HepG2 (cell line): ENCODE measurements at regions of chr7 and their contacts with region 1.

Region 1: GRCh38 chr7:50560865-50561351 is 4.3 kb downstream of the DDC start:
- DNase-seq: peak; percentile 80
- ATAC-seq: peak; percentile 85
- H3K4me3 ChIP-seq: peak overlapping the region in 1 of 3 experiments; percentile 42; a peak in 2 of 6 replicates
- H3K27ac ChIP-seq: peak overlapping the region; percentile 60
- H3K4me1 ChIP-seq: peaks cover 97% of the 10 kb centered on the region
- H3K27me3 ChIP-seq: no peaks in the 10 kb centered on the region
- CTCF ChIP-seq: peak; percentile 32
- EP300 ChIP-seq: peak in 1 of 2 experiments; percentile 54; a peak in 1 of 4 replicates
- POLR2A ChIP-seq: peak; percentile 52 to 69; a peak in 3 of 4 replicates
- RAD21 ChIP-seq: peak; percentile 44

Region 2: DNA sequence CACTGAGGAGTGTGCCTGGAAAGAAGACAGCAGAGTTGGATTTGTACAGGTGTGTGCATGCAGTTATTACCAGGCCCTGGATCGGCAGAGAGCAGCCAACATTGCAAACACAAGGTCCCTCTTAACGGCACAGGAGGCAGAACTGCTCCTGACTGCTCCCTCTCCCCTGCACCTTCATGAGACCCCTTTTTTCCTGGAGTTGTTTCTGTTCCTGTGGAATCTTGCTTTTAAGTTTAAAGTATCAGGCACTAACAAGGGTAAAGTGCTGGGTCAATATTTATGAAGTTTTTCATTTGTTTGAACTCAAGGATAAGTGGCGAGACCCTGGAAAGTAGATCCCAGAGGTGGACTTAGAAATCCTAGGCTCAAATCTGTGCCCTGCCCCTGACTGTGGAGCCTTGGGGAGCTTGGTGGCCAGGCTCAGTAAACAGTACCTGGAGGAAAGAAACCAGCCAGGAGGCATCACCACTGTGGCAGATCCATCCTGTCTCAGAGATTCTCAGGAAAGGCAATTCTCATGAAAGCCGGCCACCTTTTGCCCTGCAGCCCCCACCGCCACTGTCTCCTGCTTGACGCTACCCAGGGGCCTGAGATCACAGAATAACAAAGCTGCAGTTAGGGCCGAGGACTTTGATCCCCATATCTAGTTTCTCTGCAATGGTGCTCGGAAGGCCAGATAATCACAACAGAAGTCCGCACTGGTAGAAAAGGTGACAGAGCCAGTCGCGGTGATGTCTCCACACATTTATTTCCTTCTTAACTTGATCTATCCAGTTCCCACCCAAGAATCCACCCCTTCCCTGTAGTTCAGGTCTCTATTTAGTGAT is 32.4 kb before region 1 on chr7:
- CTCF ChIA-PET with region 1: no interaction called
- POLR2A ChIA-PET with region 1: interaction called, 11 read pairs
- in situ Hi-C with region 1: no loop called
- intact Hi-C with region 1: loop called (anchors 2 kb)
- DNase-seq: peak; percentile 83
- ATAC-seq: peak; percentile 98
- H3K4me3 ChIP-seq: peak overlapping the region in 2 of 3 experiments; percentile 12 to 49; a peak in 2 of 6 replicates
- H3K27ac ChIP-seq: peak overlapping the region; percentile 72
- H3K4me1 ChIP-seq: peaks cover 36% of the 10 kb centered on the region
- H3K27me3 ChIP-seq: no peaks in the 10 kb centered on the region
- CTCF ChIP-seq: no peak
- EP300 ChIP-seq: 0 out of 4 replicates have a peak, but pooled peaks of 1 of the 2 experiments have one; percentile 10
- POLR2A ChIP-seq: no peak
- RAD21 ChIP-seq: no peak

Region 3: DNA sequence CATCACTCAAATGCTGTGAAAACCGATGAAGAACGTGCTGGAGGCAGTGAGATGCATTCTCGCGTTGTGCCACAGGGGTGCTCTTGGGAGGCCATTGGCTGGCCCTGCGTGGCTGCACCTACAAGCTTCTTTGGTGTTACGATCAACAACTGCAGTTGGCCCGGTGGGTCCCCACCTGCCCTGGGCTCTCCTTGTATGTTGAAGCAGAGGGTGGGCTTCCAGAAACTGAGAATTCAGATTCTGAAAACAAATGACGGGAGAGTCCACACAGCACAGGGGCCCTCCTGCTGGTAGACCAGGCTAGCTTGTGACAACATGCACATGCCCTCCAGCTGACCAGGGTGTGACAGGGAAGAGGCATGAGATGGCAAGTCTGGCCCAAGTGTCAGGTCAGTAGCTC is 28.0 kb after region 1 on chr7:
- CTCF ChIA-PET with region 1: no interaction called
- POLR2A ChIA-PET with region 1: interaction called, 17 read pairs
- in situ Hi-C with region 1: no loop called
- intact Hi-C with region 1: no loop called
- DNase-seq: no peak
- ATAC-seq: peak; percentile 72
- H3K4me3 ChIP-seq: peak overlapping the region in 1 of 3 experiments; percentile 8; a peak in 1 of 6 replicates
- H3K27ac ChIP-seq: no peak overlapping the region
- H3K4me1 ChIP-seq: peaks cover 43% of the 10 kb centered on the region
- H3K27me3 ChIP-seq: no peaks in the 10 kb centered on the region
- CTCF ChIP-seq: no peak
- EP300 ChIP-seq: no peak
- POLR2A ChIP-seq: no peak
- RAD21 ChIP-seq: no peak; the same call in 1 of the 2 replicates

Region 4: GRCh38 chr7:50595491-50596102 is 34.7 kb after region 1 on chr7:
- CTCF ChIA-PET with region 1: no interaction called
- POLR2A ChIA-PET with region 1: interaction called, 17 read pairs
- in situ Hi-C with region 1: no loop called
- intact Hi-C with region 1: no loop called
- DNase-seq: peak; percentile 35
- ATAC-seq: peak; percentile 65
- H3K4me3 ChIP-seq: no peak overlapping the region
- H3K27ac ChIP-seq: peak overlapping the region; percentile 12
- H3K4me1 ChIP-seq: peaks cover 64% of the 10 kb centered on the region
- H3K27me3 ChIP-seq: no peaks in the 10 kb centered on the region
- CTCF ChIP-seq: peak; percentile 77
- EP300 ChIP-seq: no peak
- POLR2A ChIP-seq: no peak
- RAD21 ChIP-seq: peak; percentile 49

Region 5: DNA sequence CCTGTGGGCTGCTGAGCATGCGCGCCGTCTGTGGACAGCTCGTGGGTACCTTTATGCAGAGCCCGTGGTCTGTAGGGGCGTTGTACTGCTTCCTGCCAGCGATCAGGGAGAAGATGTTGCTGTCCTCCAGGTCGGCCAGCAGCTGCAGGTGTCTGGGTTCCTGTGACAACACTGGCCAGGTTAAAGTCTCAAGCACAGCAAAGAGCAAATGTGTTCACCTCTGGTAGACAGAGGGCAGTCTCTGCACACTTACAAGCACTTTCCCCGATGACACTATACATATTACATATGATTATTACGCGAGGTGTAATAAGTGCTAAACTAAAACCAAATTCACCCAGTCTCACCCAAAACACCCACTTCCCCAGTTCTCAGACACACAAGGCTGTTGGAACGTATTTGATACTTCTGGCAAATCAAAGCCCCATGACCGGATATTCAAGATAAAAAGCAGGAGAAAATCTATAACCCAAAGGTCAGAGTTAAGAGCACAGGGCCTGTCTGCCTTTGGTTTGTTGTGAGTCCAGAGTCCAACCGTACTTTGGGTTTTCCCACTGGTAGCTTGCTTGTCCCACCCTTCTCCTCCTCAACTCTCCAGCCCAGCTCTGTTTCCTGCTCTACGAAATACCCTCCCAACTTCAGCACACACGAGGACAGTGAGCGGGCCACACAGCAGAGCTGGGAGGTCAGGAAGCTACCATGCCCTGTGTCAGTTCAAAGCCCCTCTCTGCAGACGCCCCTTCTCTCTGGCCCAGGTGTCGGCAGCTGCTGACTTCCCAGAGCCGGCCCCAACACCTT is 54.0 kb after region 1 on chr7:
- CTCF ChIA-PET with region 1: no interaction called
- POLR2A ChIA-PET with region 1: interaction called, 12 read pairs
- in situ Hi-C with region 1: no loop called
- intact Hi-C with region 1: no loop called
- DNase-seq: peak; percentile 74
- ATAC-seq: peak; percentile 87
- H3K4me3 ChIP-seq: peak overlapping the region in 2 of 3 experiments; percentile 9 to 42; a peak in 3 of 6 replicates
- H3K27ac ChIP-seq: peak overlapping the region; percentile 63
- H3K4me1 ChIP-seq: peaks cover 29% of the 10 kb centered on the region
- H3K27me3 ChIP-seq: no peaks in the 10 kb centered on the region
- CTCF ChIP-seq: peak; percentile 78
- EP300 ChIP-seq: peak in 1 of 2 experiments; percentile 77; a peak in 2 of 4 replicates
- POLR2A ChIP-seq: no peak
- RAD21 ChIP-seq: no peak

Region 6: DNA sequence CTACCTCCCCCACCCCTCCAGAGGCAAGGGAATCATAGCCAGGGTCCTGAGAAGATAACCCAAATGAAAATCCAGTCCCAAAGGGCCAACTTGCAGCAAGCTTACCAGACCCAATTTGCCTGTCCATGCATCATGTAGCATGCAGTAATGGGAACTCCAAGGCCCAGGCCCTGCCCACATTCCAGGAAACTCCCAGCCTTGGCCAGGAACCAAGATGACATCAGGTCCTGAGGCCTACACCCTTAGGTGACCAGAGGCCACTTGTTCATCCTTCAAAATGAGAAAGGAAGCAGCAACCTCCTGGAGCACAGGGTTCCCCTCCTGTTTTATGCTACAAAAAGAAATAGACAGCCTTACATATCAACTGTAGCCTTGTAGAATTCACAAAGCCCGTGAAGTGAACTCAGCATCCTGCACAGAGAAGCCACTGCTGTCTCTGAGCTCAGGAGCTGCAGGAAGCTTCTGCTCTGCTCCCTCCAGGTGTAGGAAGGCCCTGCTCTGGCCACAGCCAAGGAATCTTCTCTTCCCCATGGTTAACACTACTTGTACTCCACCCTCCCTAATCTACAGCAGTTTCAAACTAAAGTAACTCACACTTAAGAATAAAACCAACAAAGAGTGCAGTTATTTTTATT is 252.1 kb after region 1 on chr7:
- CTCF ChIA-PET with region 1: no interaction called
- POLR2A ChIA-PET with region 1: no interaction called
- in situ Hi-C with region 1: no loop called
- intact Hi-C with region 1: no loop called
- DNase-seq: peak; percentile 28
- ATAC-seq: peak; percentile 71; the same call in 2 of the 3 replicates
- H3K4me3 ChIP-seq: no peak overlapping the region
- H3K27ac ChIP-seq: no peak overlapping the region
- H3K4me1 ChIP-seq: no peaks in the 10 kb centered on the region
- H3K27me3 ChIP-seq: no peaks in the 10 kb centered on the region; a peak in 1 of 5 replicates
- CTCF ChIP-seq: no peak
- EP300 ChIP-seq: no peak
- POLR2A ChIP-seq: no peak
- RAD21 ChIP-seq: no peak

Region 7: DNA sequence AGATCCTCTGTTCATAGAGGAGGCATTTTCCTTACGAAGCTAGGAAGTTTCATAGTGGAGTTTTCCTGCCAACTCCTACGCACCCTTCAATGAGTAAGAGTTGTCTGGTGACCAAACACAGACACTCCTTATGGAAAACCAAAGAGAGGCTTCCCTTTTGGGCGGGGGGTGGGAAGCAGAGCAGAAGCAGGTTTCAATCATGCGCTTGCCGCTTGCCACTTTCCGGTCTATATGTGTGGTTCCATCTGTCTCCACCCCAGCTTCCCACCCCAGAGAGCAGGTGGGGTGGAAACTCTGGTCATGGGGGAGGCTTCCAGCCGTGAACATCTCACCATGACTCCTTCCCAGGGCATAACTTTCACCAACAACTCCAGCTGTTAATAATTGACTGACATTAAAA is 290.5 kb after region 1 on chr7:
- CTCF ChIA-PET with region 1: no interaction called
- POLR2A ChIA-PET with region 1: no interaction called
- in situ Hi-C with region 1: no loop called
- intact Hi-C with region 1: no loop called
- DNase-seq: no peak
- ATAC-seq: no peak
- H3K4me3 ChIP-seq: no peak overlapping the region
- H3K27ac ChIP-seq: no peak overlapping the region
- H3K4me1 ChIP-seq: no peaks in the 10 kb centered on the region
- H3K27me3 ChIP-seq: no peaks in the 10 kb centered on the region
- CTCF ChIP-seq: no peak
- EP300 ChIP-seq: no peak
- POLR2A ChIP-seq: no peak
- RAD21 ChIP-seq: no peak